ENCODE measurements at regions of chr1 and their contacts with region 1.

Region 1: DNA sequence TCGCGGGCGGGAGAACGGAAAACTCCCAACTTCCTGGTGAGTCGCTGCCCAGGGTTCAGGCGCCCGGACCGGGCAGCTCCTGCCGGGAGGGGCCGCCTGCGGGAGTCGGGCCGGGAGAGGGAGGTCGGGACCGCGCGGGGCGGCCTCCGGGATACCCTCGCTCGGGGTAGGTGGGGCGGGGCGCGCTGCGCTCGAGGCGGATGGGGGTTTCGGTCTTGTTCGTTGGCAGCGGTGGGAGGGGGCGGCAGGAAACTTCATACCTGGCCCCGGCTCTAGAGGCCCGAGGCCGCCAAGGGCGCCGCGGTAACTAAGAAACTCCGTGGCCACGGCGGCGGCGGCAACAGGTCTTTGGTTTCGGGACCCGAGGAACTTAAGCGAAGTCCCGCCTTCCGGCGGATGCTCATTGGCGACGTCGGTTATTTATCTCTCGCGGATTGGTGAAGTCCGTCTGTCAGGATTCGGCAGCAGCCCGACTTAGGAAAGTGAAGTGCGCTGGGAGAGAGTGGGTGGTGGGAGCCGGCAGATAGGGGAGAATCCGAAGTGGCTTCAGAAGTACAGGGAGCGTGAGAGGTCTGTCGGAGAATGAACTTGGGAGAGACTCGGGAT is 546 bp downstream of the NEK7 start:
- DNase-seq: peak; percentile 90 to 92 (median 90)
- H3K4me3 ChIP-seq: peak overlapping the region; percentile 87 to 98 (median 94)
- H3K27ac ChIP-seq: peak overlapping the region; percentile 88 to 93
- H3K4me1 ChIP-seq: peaks cover 27 to 49% (median 38%) of the 10 kb centered on the region in 4 experiments
- H3K27me3 ChIP-seq: no peaks in the 10 kb centered on the region

Region 2: DNA sequence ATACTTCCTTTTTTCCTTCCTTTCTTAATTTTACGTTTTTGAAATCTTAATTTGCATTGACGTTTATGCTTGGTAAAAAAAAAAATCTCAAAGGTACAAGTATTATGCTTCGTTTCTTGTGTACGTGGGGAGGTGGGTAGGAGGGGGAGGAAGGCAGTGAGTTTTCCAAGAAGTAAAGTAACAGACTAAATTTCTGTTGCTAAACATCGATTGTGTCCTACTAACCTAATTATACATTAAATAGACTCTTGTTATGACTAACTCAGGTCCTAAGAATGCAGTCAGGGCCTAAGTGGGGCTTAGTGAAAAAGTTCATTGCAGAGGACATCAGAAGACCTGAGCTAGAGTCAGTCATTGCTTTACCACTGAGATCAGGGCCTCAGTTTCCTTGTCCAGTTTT is 17.0 kb after region 1 on chr1:
- CTCF ChIA-PET with region 1: interaction called, 12 read pairs
- POLR2A ChIA-PET with region 1: interaction called, 9 read pairs
- DNase-seq: peak in 2 of 3 donors; percentile 40 to 52
- H3K4me3 ChIP-seq: peak overlapping the region in 5 of 7 experiments; percentile 25 to 65 (median 27)
- H3K27ac ChIP-seq: peak overlapping the region; percentile 56 to 80
- H3K4me1 ChIP-seq: peaks cover 31 to 99% (median 49%) of the 10 kb centered on the region in 4 experiments
- H3K27me3 ChIP-seq: no peaks in the 10 kb centered on the region